Activated T-helper 1 cell treated with anti-CD3 and anti-CD28 coated beads, Interleukin-12 subunit alpha, Interleukin-12 subunit beta, Interleukin-2, Interleukin-4 antibody, amounts not matched to agents 30 ng/mL and 10 ng/mL and 1 ng/mL, durations not matched to agents 14 hours and 24 hours and 36 hours (primary cell): ENCODE measurements at regions of chr5 and their contacts with region 1.

Region 1: GRCh38 chr5:87780831-87781760 is 368.4 kb upstream of the CCNH start:
- DNase-seq: peak; percentile 64
- H3K4me3 Mint-ChIP-seq: no peak overlapping the region
- H3K27ac Mint-ChIP-seq: no peak overlapping the region
- H3K4me1 Mint-ChIP-seq: no peaks in the 10 kb centered on the region
- H3K27me3 Mint-ChIP-seq: peaks cover 10% of the 10 kb centered on the region

Region 2: DNA sequence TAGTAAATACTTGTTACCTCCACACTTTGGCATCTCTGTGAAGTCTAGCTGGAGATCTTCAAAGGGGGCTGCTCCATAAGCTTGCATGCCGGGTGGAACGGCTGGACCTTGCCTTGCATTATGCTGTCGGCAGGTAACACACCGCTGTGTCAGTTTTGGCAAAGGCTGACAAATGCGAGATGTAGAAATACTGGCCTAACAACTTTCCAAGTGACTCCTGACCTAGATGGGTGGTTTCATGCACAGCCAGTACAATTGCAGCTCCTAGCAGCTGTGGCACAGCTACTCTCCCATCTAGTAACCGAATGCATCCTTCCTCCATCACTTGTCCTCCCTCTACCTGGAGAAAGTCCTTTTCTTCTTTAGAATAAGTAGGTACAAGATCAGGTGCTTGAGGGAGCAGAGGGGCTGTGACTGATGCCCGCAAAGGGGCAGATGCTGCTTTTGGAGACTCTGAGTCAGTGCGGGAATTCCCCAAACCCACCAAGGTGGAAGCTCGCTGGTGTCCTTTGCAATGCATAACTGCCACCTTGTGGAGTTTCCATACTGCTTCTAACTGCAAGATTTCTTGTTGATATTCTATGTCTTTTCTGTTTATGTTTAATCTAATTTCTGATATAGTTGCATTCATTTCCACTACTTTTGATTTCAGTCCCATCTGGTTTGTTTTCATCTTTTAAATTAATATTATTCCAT is 409.2 kb after region 1 on chr5:
- intact Hi-C with region 1: loop called (anchors 10 kb)
- DNase-seq: no peak
- H3K4me3 Mint-ChIP-seq: no peak overlapping the region
- H3K27ac Mint-ChIP-seq: no peak overlapping the region
- H3K4me1 Mint-ChIP-seq: no peaks in the 10 kb centered on the region
- H3K27me3 Mint-ChIP-seq: no peaks in the 10 kb centered on the region

Region 3: DNA sequence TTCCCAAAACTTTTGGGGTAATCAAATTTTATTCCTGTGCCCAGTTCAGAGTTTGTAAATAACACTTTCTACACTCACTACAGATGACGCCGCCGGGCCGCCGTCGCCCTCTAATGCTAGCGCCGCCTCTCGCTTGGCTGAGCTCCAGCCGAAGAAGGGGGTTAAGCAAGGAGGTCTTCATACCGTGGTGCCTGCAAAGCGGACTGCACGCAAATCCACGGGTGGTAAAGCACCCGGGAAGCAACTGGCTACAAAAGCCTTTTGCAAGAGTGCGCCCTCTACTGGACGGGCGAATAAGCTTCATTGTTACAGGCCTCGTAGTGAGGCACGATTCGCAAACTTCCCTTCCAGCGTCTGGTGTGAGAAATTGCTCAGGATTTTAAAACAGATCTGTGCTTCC is 821.5 kb after region 1 on chr5:
- intact Hi-C with region 1: loop called (anchors 1 kb)
- DNase-seq: peak; percentile 4
- H3K4me3 Mint-ChIP-seq: no peak overlapping the region
- H3K27ac Mint-ChIP-seq: no peak overlapping the region
- H3K4me1 Mint-ChIP-seq: no peaks in the 10 kb centered on the region
- H3K27me3 Mint-ChIP-seq: no peaks in the 10 kb centered on the region

Region 4: DNA sequence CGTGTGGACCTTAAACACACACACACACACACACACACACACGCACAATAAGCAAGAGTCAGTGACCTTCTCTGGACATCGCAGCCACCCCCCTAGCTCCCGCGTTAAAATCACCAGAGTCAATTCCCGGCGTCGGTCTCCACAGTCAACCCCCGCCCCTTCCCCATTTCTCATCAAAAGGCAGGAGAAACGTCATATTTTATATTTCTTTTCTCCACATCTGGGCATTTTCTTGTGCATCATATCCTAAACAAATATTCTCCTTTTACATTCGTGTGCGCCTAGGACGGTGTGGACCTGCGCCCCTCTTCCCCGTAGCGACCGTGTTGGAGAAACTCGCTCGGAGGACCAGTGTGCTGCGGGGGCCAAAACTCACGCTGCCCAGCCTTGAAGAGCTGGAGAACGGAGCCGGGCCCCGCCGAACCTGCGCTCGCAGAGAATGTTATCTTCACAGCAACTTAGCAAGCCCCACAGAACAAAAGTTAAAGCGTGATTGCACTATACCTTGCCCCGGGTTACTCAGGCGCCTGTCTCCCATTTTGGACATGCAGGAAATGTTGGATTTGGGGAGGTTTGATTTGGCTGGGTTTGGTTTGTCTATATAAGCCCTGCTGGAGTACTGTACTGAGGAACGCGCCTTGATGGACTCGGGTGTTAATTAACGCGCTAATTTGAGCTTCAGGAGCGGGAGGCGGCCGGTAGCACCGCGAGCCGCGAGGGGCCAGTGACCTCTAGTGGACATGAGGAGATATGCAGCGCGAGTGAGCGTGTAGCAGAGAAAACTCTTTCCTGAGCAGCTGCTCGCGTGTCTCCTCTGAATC is 909.5 kb after region 1 on chr5:
- intact Hi-C with region 1: loop called (anchors 1 kb)
- DNase-seq: peak; percentile 60
- H3K4me3 Mint-ChIP-seq: peak overlapping the region; percentile 62
- H3K27ac Mint-ChIP-seq: peak overlapping the region; percentile 92
- H3K4me1 Mint-ChIP-seq: peaks cover 21% of the 10 kb centered on the region
- H3K27me3 Mint-ChIP-seq: peaks cover 87% of the 10 kb centered on the region